Right cardiac atrium (tissue), 5 donors: ENCODE measurements at regions of chr12 and their contacts with region 1.

Region 1: DNA sequence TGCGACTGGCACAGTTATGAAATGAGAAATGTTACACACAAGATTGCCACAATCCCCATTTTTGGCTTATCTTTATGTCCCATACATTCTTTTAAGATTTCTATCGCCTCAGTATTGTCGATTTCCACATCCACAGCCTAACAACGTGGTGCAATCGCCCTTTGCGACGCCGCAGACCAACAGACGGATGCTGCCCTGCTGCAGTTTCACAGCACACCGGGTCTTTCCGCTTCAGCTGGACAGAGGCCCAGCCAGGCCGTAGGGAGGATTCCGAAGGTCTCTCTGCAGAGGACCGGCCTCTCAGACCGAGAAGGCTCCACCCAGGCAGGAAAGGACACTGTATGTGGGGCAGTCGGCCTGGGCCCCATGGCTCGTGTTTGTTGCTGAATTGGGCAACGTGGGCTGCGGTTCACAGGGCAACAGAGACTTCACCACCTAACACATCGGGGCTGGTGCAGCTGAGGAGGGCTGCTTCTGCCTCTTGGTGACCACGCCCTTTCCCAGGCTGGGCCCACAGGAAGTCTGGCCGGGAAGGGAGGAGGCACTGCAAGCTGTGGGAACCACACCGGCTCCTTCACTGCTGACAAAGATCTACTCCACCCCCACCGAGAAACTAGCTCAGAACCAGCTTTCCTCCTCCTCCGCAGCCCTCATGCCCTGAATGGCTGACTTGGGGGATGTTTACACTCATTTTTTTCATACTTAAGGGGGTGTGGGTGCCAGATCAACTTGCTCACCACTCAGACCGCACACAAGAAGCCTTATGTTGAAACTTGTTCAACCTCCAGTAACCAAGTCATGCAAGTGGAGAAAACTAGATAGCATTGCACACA is 32.9 kb upstream of the MDM1 start:
- DNase-seq: peak; percentile 95 to 96 (median 96)
- ATAC-seq: peak; percentile 98 to 99
- H3K4me3 ChIP-seq: peak overlapping the region; percentile 20
- H3K27ac ChIP-seq: peak overlapping the region; percentile 86
- H3K4me1 ChIP-seq: no peaks in the 10 kb centered on the region
- H3K27me3 ChIP-seq: no peaks in the 10 kb centered on the region

Region 2: DNA sequence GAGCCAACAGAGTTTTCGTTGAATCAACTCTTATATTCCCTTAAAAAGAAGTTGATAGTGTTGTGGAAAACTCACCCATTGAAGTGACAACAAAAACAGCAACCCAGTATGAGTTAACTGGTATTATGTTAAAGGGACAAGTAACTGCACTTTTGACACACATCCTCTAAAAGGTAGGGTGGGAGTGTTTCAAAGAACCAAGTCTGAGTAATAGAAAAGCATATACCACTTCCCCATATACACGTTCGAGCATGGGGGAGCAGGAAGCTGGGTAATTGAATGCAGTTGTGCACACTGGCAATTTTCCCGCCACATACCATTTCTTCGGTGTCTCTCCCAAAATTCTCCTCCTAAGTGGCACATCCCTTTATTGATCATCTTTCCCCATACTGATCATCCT is 344.4 kb before region 1 on chr12:
- intact Hi-C with region 1: no loop called
- DNase-seq: no peak
- ATAC-seq: no peak
- H3K4me3 ChIP-seq: no peak overlapping the region
- H3K27ac ChIP-seq: no peak overlapping the region
- H3K4me1 ChIP-seq: no peaks in the 10 kb centered on the region
- H3K27me3 ChIP-seq: no peaks in the 10 kb centered on the region

Region 3: DNA sequence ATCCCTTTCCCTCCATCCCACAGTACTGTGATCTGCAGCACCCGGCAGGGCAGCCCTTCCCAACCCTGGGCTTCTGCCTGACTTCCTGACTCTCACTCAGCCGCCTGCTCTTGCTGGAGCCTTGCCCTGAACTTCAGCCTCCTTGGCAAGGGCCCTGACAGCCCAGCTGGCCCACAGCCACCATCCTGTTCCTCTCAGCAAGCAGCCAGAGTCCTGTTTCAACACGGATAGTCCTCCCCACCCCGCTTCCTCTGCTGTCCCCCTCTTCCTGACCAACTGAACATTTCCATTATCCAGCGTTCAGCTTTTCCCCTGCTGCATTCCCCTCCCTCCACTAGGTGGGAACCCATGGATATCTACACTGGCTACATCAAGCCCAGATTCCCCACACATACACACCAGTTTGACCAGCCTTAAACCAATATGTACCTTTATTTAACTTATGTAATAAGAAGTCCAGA is 41.1 kb after region 1 on chr12:
- intact Hi-C with region 1: loop called in 1 of 4 experiments (anchors 5 kb)
- DNase-seq: peak; percentile 95 to 97 (median 97)
- ATAC-seq: peak; percentile 98
- H3K4me3 ChIP-seq: no peak overlapping the region
- H3K27ac ChIP-seq: peak overlapping the region; percentile 80
- H3K4me1 ChIP-seq: peaks cover 8% of the 10 kb centered on the region
- H3K27me3 ChIP-seq: no peaks in the 10 kb centered on the region

Region 4: GRCh38 chr12:68530965-68531364 is 165.9 kb after region 1 on chr12:
- intact Hi-C with region 1: no loop called
- DNase-seq: peak in 2 of 3 donors; percentile 18 to 22
- ATAC-seq: peak; percentile 75 to 77
- H3K4me3 ChIP-seq: no peak overlapping the region
- H3K27ac ChIP-seq: no peak overlapping the region
- H3K4me1 ChIP-seq: peaks cover 2% of the 10 kb centered on the region
- H3K27me3 ChIP-seq: no peaks in the 10 kb centered on the region

Region 5: DNA sequence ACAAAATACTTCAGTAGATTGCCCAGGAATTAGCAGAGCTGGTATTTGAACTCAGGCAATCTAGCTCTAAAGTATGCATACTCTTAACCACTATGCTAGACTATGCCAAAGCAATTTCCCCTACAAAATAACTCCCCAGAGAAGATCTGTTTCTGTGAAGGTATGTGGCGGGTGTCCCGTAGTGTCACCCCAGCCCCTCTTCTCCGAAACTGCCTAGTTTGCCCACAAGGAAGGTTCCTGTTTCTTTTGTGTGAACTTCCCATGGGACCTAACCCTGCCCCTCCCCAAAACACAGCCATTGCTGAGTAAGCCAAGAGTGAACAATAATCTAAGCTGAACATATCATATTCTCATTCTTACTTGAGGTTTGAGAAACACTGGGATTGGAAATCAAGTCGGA is 230.1 kb after region 1 on chr12:
- intact Hi-C with region 1: no loop called
- DNase-seq: no peak
- ATAC-seq: no peak
- H3K4me3 ChIP-seq: no peak overlapping the region
- H3K27ac ChIP-seq: no peak overlapping the region
- H3K4me1 ChIP-seq: no peaks in the 10 kb centered on the region
- H3K27me3 ChIP-seq: no peaks in the 10 kb centered on the region